ENCODE measurements at regions of chr4 and their contacts with region 1.

Region 1: DNA sequence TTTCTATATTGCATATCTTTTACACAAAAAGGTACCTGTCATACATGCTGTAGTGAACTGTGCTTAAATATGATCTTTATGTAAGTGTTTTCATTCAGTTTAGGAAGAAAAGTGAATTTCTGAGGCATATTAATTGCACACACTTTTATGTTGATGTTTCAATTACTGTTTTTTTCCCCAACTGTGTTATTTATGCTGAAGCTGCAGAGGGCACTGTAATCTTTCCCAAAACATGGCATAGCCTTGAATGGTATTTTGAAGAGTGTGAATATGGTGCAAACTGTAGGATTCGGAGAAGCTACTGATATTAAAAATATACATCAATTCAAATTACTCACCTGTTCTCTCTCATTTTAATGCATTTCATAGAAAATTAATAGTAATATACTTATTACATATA is 6.0 kb upstream of the CENPE start:
- DNase-seq: no peak
- ATAC-seq: no peak
- H3K4me3 ChIP-seq: no peak overlapping the region
- H3K4me3 Mint-ChIP-seq: no peak overlapping the region
- H3K27ac ChIP-seq: no peak overlapping the region
- H3K27ac Mint-ChIP-seq: no peak overlapping the region
- H3K4me1 ChIP-seq: no peaks in the 10 kb centered on the region
- H3K4me1 Mint-ChIP-seq: no peaks in the 10 kb centered on the region
- H3K27me3 ChIP-seq: no peaks in the 10 kb centered on the region
- H3K27me3 Mint-ChIP-seq: peaks cover 0 to 49% (median 12%) of the 10 kb centered on the region in 5 donors

Region 2: DNA sequence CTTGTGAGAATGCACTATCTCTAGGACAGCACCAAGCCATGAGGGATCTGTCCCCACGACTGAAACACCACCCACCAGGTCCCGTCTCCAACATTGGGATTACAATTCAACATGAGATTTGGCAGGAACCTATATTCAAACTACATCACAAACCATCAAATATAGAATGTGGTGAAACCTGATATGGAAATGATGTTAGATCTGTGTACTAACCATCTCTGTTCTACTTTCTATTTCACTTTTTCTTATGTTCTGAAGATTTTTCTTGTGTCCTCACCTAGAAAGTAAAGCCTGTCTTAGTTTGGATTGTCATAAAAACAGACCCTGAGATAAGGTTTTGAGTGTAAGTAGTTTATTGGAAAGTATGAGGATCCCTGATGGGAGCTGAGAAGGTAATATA is 553.5 kb after region 1 on chr4:
- CTCF ChIA-PET with region 1: no interaction called
- POLR2A ChIA-PET with region 1: no interaction called
- intact Hi-C with region 1: no loop called
- DNase-seq: no peak
- ATAC-seq: no peak
- H3K4me3 ChIP-seq: no peak overlapping the region
- H3K4me3 Mint-ChIP-seq: no peak overlapping the region
- H3K27ac ChIP-seq: no peak overlapping the region
- H3K27ac Mint-ChIP-seq: no peak overlapping the region
- H3K4me1 ChIP-seq: no peaks in the 10 kb centered on the region
- H3K4me1 Mint-ChIP-seq: no peaks in the 10 kb centered on the region
- H3K27me3 ChIP-seq: no peaks in the 10 kb centered on the region
- H3K27me3 Mint-ChIP-seq: no peaks in the 10 kb centered on the region

Region 3: DNA sequence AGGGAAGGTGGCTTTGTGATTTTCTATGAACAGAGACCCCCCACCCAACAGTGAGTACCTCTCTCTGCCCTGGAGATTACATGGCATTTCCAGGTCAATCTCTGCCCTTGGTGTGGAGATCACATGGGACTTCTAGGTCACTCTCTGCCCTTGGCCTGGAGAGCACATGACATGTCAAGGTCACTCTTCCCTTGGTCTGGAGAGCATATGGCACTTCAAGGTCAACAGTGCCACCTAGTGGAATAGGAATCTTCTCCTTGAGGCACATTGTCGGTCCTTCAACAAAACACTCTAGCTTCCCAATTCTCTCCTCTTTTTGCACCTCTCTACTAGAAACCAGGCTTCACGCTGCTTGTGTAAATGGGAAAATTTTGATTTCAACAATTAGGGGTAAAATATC is 581.9 kb after region 1 on chr4:
- CTCF ChIA-PET with region 1: no interaction called
- POLR2A ChIA-PET with region 1: no interaction called
- intact Hi-C with region 1: loop called in 1 of 2 experiments (anchors 5 kb)
- DNase-seq: no peak
- ATAC-seq: no peak
- H3K4me3 ChIP-seq: no peak overlapping the region
- H3K4me3 Mint-ChIP-seq: no peak overlapping the region
- H3K27ac ChIP-seq: no peak overlapping the region
- H3K27ac Mint-ChIP-seq: no peak overlapping the region
- H3K4me1 ChIP-seq: no peaks in the 10 kb centered on the region
- H3K4me1 Mint-ChIP-seq: no peaks in the 10 kb centered on the region
- H3K27me3 ChIP-seq: no peaks in the 10 kb centered on the region
- H3K27me3 Mint-ChIP-seq: no peaks in the 10 kb centered on the region

Measured in naive thymus-derived CD4-positive, alpha-beta T cell (primary cell).